H1 (cell line): ENCODE measurements at regions of chr5 and their contacts with region 1.

Region 1: DNA sequence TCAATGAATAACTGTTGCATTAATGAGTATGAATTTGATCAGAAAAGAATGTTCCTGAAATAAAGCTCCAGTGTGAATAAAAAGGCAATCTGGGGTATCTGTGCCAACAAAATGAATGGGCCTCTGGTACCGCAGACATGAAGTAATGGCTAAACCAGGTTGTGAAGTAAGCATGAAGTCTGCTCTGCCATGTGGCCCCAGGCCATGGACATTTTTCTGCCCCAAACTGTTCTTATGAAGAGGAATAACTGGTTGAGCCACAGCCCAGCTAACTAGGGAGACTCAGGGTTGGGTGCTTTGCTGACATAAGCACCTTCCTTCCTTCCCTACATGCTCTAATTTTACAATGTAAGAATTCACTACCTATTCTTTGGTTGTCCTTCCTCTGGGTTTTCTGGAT is 147.4 kb upstream of the LRRTM2 start:
- DNase-seq: no peak
- H3K4me3 ChIP-seq: no peak overlapping the region
- H3K27ac ChIP-seq: no peak overlapping the region
- H3K4me1 ChIP-seq: no peaks in the 10 kb centered on the region
- H3K27me3 ChIP-seq: no peaks in the 10 kb centered on the region
- CTCF ChIP-seq: no peak
- EP300 ChIP-seq: no peak
- POLR2A ChIP-seq: no peak
- RAD21 ChIP-seq: no peak

Region 2: DNA sequence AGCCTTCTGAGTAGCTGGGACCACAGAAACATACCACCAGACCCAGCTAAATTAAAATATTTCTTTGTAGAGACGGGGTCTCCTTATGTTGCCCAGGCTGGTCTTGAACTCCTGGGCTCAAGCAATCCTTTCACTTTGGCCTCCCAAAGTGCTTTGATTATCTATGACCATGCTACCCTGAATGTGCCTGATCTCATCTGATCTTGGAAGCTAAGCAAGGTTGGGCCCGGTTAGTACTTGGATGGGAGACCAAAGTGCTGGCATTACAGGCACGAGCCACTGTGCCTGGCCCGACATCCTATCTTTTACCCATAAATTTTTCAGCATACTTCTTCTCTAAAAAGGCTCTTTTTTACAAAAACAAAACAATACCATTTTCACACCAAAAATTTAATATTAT is 10.4 kb before region 1 on chr5:
- CTCF ChIA-PET with region 1: interaction called, 3 read pairs
- POLR2A ChIA-PET with region 1: interaction called, 13 read pairs
- DNase-seq: peak in 1 of 2 experiments; percentile 58
- H3K4me3 ChIP-seq: no peak overlapping the region
- H3K27ac ChIP-seq: no peak overlapping the region
- H3K4me1 ChIP-seq: no peaks in the 10 kb centered on the region
- H3K27me3 ChIP-seq: no peaks in the 10 kb centered on the region; a peak in 1 of 7 replicates
- CTCF ChIP-seq: no peak
- EP300 ChIP-seq: no peak
- POLR2A ChIP-seq: no peak
- RAD21 ChIP-seq: no peak

Region 3: GRCh38 chr5:139038613-139039305 is 16.2 kb after region 1 on chr5:
- CTCF ChIA-PET with region 1: interaction called, 12 read pairs
- POLR2A ChIA-PET with region 1: no interaction called
- DNase-seq: peak in 1 of 2 experiments; percentile 42
- H3K4me3 ChIP-seq: no peak overlapping the region
- H3K27ac ChIP-seq: no peak overlapping the region
- H3K4me1 ChIP-seq: no peaks in the 10 kb centered on the region
- H3K27me3 ChIP-seq: no peaks in the 10 kb centered on the region
- CTCF ChIP-seq: peak; percentile 4 to 77 (median 34)
- EP300 ChIP-seq: no peak
- POLR2A ChIP-seq: no peak
- RAD21 ChIP-seq: peak; percentile 45 to 61